Activated CD4-positive, alpha-beta T cell treated with anti-CD3 and anti-CD28 coated beads for 36 hours (primary cell): ENCODE measurements at regions of chr10 and their contacts with region 1.

Region 1: DNA sequence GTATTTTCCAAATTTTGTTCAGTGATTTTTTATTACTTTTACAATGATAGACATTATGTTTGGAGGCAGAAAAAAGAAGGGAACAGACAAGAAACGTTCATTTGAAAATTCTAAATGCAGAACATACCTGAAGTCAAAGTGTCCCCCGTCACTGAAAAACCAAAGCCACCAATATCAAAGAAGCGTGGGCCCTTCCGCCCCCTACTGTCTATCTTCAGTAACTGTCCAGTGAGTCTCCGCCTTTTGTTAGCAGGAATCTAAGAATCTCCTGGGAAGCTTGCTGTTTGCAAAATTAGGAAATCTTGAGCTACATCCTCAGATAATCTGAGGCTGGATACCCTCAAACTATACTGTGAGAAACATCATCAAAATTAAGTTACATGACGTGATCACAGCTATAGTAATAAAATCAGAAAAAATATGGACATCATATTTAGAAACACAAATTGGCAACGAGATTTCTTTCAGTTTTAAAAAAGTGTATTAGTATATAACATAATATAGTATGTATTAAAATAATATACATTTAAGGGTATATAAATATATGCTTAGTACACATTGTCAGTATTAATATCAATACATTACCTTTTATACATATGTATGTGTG is 169.3 kb upstream of the AKR1E2 start:
- DNase-seq: peak; percentile 65
- ATAC-seq: no peak
- H3K4me3 Mint-ChIP-seq: no peak overlapping the region
- H3K27ac Mint-ChIP-seq: no peak overlapping the region
- H3K4me1 Mint-ChIP-seq: peaks cover 21% of the 10 kb centered on the region
- H3K27me3 Mint-ChIP-seq: peaks cover 9% of the 10 kb centered on the region

Region 2: DNA sequence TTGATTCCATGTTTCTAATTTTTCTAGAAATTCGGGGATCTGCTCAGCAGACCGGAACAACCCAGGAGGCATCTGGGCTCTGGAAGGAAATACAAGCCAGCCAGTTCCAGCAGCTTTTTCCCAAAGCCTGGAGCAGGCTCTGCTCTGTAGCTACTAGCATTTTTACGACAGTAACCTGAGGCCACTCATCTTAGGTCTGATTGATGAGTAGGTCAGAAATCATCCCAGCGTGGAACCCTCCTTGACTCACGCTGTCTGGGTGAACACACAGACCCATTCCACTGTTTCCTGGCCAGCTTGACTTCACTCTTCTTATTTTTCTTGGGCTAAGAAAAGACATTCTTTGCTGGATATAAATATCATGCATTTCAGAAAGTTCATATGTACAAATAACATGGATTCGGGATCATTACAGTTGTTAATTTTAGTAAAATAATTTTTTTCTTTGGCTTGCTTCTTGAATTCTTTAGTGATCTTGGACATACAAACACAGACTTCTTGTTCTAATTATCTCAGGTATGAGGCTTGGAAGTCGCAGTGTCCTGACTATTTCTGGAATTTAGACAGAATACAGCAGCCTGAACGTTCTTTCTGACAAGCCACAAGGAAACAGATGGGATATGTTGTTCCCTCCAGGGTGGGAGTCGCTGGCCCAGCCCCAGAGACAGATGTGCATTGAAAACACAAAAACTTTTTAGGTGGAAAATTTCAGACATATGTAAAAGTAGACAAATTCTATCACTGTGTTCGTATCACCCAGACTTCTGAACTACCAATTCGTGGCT is 1429.5 kb before region 1 on chr10:
- CTCF ChIA-PET with region 1: no interaction called
- POLR2A ChIA-PET with region 1: no interaction called
- intact Hi-C with region 1: loop called in 1 of 2 experiments (anchors 1 kb)
- DNase-seq: no peak
- ATAC-seq: peak; percentile 18
- H3K4me3 Mint-ChIP-seq: no peak overlapping the region
- H3K27ac Mint-ChIP-seq: no peak overlapping the region
- H3K4me1 Mint-ChIP-seq: peaks cover 20% of the 10 kb centered on the region
- H3K27me3 Mint-ChIP-seq: peaks cover 8% of the 10 kb centered on the region

Region 3: DNA sequence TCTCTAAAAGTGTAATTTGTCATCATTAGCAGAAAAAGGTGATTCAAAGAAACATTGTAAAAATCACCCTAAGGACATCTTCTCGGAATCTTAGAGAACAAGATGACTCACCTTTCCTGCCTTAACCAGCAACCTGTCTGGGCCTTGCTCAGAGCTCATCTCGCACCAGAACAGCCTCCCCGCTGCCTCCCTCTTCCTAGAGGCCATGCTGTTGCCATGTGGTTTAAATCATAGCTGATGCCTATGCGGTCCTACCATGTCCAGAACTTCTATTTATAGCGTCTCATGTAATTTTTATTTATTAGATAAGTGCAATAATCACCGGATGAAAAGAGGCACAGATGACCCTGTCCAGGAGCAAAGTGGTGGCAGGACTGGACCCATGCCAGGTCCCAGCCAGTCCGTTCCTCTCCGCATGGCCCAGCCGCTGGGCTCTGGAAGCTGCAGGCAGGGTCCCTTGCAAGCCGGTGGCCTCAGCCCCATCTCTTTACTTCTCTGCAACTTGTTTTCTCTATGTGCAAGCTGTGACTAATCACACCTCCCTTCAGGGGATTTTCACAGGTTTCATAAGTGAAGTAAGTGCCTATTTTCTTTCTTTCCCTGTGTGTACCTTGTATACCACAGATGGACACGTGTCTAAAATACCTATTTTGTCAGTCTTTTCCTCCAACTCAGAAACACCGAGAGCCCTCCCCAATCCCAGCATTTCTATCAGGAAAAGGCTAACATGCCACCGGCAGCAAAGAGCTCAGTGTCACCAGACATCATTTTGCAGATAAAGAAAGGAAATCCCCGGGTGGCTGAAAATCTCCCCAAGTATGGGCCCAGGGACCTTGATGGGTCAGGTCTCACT is 898.8 kb before region 1 on chr10:
- CTCF ChIA-PET with region 1: no interaction called
- POLR2A ChIA-PET with region 1: no interaction called
- intact Hi-C with region 1: loop called in 1 of 2 experiments (anchors 5 kb)
- DNase-seq: peak; percentile 80
- ATAC-seq: peak; percentile 80
- H3K4me3 Mint-ChIP-seq: peak overlapping the region; percentile 66
- H3K27ac Mint-ChIP-seq: peak overlapping the region; percentile 99
- H3K4me1 Mint-ChIP-seq: peaks cover 80% of the 10 kb centered on the region
- H3K27me3 Mint-ChIP-seq: no peaks in the 10 kb centered on the region

Region 4: GRCh38 chr10:3867454-3868270 is 789.0 kb before region 1 on chr10:
- CTCF ChIA-PET with region 1: no interaction called
- POLR2A ChIA-PET with region 1: no interaction called
- intact Hi-C with region 1: loop called in 1 of 2 experiments (anchors 1 kb)
- DNase-seq: peak; percentile 60
- ATAC-seq: peak; percentile 76
- H3K4me3 Mint-ChIP-seq: peak overlapping the region; percentile 10
- H3K27ac Mint-ChIP-seq: peak overlapping the region; percentile 81
- H3K4me1 Mint-ChIP-seq: peaks cover 69% of the 10 kb centered on the region
- H3K27me3 Mint-ChIP-seq: no peaks in the 10 kb centered on the region

Region 5: DNA sequence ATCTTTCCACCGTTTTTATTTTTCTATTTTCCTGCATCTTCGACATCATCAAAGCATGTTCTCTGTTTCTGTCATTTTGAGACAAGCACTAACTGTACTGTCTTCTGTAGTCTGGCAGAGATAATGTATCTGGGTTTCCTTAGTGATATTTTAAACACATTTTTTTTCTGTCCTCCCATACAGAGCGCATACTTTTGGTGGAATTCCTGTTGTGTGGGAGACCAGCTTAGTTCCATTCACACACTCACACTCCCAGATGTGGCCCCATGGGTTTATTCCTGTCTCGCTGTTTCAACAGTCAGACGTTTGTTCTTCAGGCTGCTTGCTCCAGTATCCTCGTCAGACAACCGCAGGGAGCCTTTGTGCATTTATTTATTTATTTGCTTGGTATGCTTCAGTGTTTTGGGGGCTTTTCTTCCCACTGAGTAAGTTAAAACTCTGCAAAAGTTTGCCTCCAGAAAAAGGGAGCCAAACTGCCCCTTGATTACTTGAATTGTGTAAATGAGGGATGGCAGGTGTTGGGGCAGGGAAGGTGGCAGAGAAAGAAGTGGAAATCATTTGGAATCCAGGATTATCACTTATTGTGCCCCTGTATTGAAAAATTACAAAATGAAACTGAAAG is 414.8 kb before region 1 on chr10:
- CTCF ChIA-PET with region 1: no interaction called
- POLR2A ChIA-PET with region 1: no interaction called
- intact Hi-C with region 1: loop called in 1 of 2 experiments (anchors 2 kb)
- DNase-seq: no peak
- ATAC-seq: no peak
- H3K4me3 Mint-ChIP-seq: no peak overlapping the region
- H3K27ac Mint-ChIP-seq: no peak overlapping the region
- H3K4me1 Mint-ChIP-seq: peaks cover 35% of the 10 kb centered on the region
- H3K27me3 Mint-ChIP-seq: no peaks in the 10 kb centered on the region

Region 6: DNA sequence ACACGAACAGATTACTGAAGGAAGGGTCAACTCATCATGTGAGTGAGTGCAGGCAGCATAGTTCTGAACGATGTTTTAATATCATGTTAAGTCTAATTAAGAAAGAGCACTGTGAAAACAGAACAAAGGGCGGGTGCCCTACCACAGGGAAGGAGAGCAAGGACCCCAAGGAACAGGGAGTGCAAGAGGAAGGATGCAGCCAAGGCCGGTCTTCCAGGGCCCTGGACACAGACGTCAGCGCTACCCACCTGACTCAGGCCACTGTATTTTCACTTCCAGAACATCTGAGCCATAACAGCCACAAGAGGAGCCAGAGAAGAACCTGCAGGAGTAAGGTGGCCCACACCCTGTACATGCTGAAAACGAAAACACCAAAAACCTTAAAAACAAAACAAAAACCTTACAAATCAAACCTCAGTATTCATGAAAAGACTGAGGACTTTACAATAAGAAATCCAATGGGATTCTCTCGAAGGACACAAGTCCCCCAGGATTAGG is 336.8 kb before region 1 on chr10:
- CTCF ChIA-PET with region 1: no interaction called
- POLR2A ChIA-PET with region 1: no interaction called
- intact Hi-C with region 1: no loop called
- DNase-seq: no peak
- ATAC-seq: no peak
- H3K4me3 Mint-ChIP-seq: no peak overlapping the region
- H3K27ac Mint-ChIP-seq: no peak overlapping the region
- H3K4me1 Mint-ChIP-seq: no peaks in the 10 kb centered on the region
- H3K27me3 Mint-ChIP-seq: no peaks in the 10 kb centered on the region

Region 7: GRCh38 chr10:4546500-4546899 is 110.2 kb before region 1 on chr10:
- CTCF ChIA-PET with region 1: no interaction called
- POLR2A ChIA-PET with region 1: no interaction called
- intact Hi-C with region 1: loop called in 1 of 2 experiments (anchors 1 kb)
- DNase-seq: peak; percentile 48
- ATAC-seq: peak; percentile 94
- H3K4me3 Mint-ChIP-seq: no peak overlapping the region
- H3K27ac Mint-ChIP-seq: no peak overlapping the region
- H3K4me1 Mint-ChIP-seq: peaks cover 8% of the 10 kb centered on the region
- H3K27me3 Mint-ChIP-seq: peaks cover 18% of the 10 kb centered on the region

Region 8: DNA sequence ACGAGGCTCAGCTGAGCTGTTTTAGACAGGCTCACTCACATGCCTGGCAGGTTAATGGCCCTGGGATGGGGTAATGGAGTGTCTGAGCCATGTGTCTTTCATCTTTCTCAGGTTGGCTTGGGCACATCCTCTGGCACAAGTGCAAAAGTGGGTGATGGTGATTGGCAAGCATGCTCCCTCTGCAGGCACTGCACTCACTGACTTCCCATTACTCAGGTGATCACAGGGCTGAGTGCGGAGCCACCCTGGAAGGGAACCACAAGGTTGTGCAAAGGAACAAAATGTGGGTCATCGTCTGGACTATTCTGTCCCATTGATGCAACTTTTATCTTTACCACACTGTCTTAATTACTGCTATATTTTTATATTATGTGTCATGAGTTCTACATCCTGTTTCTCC is 74.8 kb before region 1 on chr10:
- CTCF ChIA-PET with region 1: no interaction called
- POLR2A ChIA-PET with region 1: no interaction called
- intact Hi-C with region 1: no loop called
- DNase-seq: no peak
- ATAC-seq: no peak
- H3K4me3 Mint-ChIP-seq: no peak overlapping the region
- H3K27ac Mint-ChIP-seq: no peak overlapping the region
- H3K4me1 Mint-ChIP-seq: no peaks in the 10 kb centered on the region
- H3K27me3 Mint-ChIP-seq: peaks cover 6% of the 10 kb centered on the region

Region 9: GRCh38 chr10:4801368-4801767 is 144.7 kb after region 1 on chr10:
- CTCF ChIA-PET with region 1: no interaction called
- POLR2A ChIA-PET with region 1: no interaction called
- intact Hi-C with region 1: no loop called
- DNase-seq: no peak
- ATAC-seq: no peak
- H3K4me3 Mint-ChIP-seq: no peak overlapping the region
- H3K27ac Mint-ChIP-seq: no peak overlapping the region
- H3K4me1 Mint-ChIP-seq: no peaks in the 10 kb centered on the region
- H3K27me3 Mint-ChIP-seq: peaks cover 7% of the 10 kb centered on the region